ENCODE measurements at regions of chr7 and their contacts with region 1.

Region 1: GRCh38 chr7:80941208-80941758 is 22.4 kb upstream of the SEMA3C start:
- DNase-seq: peak; percentile 86
- ATAC-seq: no peak
- H3K4me3 ChIP-seq: peak overlapping the region; percentile 25; the same call in 1 of the 2 replicates
- H3K27ac ChIP-seq: peak overlapping the region; percentile 99
- H3K4me1 ChIP-seq: peaks cover 41% of the 10 kb centered on the region
- H3K27me3 ChIP-seq: no peaks in the 10 kb centered on the region
- CTCF ChIP-seq: no peak

Region 2: DNA sequence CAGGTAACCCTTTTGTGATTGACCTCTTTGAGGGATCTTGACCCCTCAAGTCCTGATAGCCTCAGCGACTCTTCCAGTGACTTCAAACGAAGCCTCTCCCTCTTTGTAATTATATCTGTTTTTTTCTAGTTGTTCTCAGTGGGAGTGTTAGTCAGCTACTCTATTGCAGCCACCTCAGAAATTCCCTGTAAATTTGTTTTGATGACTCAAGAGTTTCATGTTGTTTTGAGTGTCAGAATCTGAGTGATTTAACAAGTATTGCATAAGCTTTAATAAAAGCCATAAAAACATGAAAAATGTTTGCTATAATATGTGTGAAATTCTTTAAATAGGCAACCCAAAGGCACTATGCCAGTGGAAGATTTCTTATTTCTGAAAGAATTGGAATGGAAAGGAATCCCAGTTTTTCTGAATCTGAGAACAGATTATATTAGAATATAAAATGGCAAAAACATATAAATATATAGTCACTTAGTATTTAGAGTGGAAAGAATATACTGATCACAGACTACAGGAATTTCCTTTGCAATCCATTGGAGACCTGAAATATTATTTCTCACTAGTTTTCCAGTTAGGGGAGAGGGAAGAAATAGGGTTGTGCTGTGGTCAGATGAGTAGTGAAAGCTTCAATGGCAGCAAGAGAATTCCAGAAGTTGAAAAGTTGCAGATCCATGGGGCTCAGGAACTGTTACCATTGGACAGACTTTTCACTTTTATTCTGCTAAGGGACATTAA is 72.0 kb after region 1 on chr7:
- CTCF ChIA-PET with region 1: no interaction called
- POLR2A ChIA-PET with region 1: no interaction called
- intact Hi-C with region 1: loop called (anchors 1 kb)
- DNase-seq: peak; percentile 71
- ATAC-seq: peak; percentile 93
- H3K4me3 ChIP-seq: no peak overlapping the region
- H3K27ac ChIP-seq: peak overlapping the region; percentile 76
- H3K4me1 ChIP-seq: peaks cover 24% of the 10 kb centered on the region
- H3K27me3 ChIP-seq: no peaks in the 10 kb centered on the region
- CTCF ChIP-seq: no peak

Region 3: GRCh38 chr7:81173766-81174281 is 232.5 kb after region 1 on chr7:
- CTCF ChIA-PET with region 1: no interaction called
- POLR2A ChIA-PET with region 1: no interaction called
- intact Hi-C with region 1: loop called (anchors 5 kb)
- DNase-seq: peak; percentile 70
- ATAC-seq: peak; percentile 80
- H3K4me3 ChIP-seq: no peak overlapping the region; the same call in 1 of the 2 replicates
- H3K27ac ChIP-seq: no peak overlapping the region
- H3K4me1 ChIP-seq: peaks cover 9% of the 10 kb centered on the region
- H3K27me3 ChIP-seq: no peaks in the 10 kb centered on the region
- CTCF ChIP-seq: no peak

Region 4: DNA sequence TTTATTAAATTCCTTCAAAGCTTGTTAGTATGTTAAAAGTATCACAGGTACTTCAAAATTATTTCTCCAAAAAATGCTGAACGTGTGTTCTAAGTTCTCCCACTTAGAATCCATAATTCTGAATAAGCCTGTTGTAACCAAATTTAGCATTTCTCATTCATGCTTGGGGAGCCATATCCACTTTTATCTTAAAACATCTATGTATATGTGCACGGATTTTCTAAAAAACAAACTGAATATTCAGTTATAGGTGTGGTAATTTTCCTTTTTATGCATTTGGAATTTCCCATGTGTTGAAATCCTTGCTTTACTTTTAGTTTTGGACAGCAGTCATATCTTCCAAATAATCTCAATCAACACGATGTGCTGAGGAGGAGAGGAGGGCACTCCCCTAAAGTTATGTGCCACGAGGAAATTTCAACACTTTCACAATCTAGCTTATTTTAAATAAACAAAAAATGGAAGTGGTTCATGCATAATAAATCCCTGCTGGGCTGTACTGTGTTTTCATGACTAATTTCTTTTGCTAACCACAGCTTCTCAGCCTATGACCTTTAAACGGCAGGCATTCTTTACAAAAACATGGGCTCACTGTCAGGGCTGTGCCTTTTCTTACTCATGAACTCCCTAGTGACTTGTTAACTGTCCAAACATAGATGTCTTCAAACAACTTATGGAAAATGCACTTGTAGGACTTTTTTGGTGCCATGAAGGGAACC is 357.8 kb after region 1 on chr7:
- CTCF ChIA-PET with region 1: no interaction called
- POLR2A ChIA-PET with region 1: no interaction called
- intact Hi-C with region 1: loop called (anchors 1 kb)
- DNase-seq: peak; percentile 89
- ATAC-seq: peak; percentile 99
- H3K4me3 ChIP-seq: peak overlapping the region; percentile 8; the same call in 1 of the 2 replicates
- H3K27ac ChIP-seq: peak overlapping the region; percentile 57
- H3K4me1 ChIP-seq: peaks cover 29% of the 10 kb centered on the region
- H3K27me3 ChIP-seq: no peaks in the 10 kb centered on the region
- CTCF ChIP-seq: no peak